Aorta (tissue), 5 donors: ENCODE measurements at regions of chr9 and their contacts with region 1.

Region 1: DNA sequence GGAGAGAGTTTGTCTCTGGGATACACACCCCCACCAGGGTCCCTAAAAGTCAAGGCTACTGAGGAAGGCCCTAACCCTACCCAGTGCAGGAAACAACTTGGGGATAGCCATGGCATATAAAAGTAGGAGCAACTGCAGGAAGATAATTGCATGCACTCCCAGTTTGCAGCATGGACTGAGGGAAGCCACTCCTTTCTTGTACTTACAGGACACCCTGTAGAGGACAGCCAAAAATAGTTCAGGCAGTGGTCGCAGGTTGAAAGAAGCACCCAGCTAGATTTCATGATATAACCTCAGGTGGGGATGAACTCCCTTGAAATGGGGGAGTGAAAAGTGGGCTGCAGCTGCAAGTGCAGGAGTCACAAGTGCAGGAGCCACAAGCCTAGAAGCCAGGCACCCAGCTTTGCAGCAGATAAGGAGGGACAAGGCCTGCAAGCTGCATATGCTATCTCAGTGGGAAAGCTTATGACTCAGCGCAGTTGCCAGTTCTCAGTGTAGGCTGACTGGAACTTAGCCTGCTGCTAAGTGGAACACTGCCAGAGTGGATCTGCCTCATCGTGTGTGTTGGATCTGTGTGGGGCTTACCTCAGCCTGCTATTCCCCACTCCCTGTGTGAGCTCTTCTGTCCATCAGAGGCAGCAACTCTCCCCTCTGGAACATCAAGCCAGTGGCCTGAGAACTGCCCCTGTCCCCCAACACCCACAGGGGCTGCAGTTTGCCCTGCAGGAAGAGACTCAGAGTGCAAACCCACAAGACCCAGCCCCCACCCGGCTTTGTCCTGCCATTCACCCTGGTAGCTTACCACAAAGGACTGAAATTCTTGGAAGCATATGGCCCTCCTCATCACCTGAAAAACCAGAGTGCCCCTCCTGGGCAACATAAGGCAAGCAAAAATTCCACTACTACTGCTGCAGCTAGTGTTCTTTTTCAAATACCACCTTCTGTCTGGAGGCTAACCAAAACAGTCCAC is 42.7 kb downstream of the CYLC2 start:
- DNase-seq: no peak
- ATAC-seq: no peak
- H3K4me3 ChIP-seq: no peak overlapping the region
- H3K27ac ChIP-seq: no peak overlapping the region
- H3K4me1 ChIP-seq: no peaks in the 10 kb centered on the region
- H3K27me3 ChIP-seq: no peaks in the 10 kb centered on the region

Region 2: GRCh38 chr9:102985162-102985895 is 52.5 kb before region 1 on chr9:
- intact Hi-C with region 1: loop called in 1 of 2 experiments (anchors 5 kb)
- DNase-seq: no peak
- ATAC-seq: peak; percentile 36
- H3K4me3 ChIP-seq: no peak overlapping the region
- H3K27ac ChIP-seq: no peak overlapping the region
- H3K4me1 ChIP-seq: no peaks in the 10 kb centered on the region
- H3K27me3 ChIP-seq: no peaks in the 10 kb centered on the region

Region 3: GRCh38 chr9:103089357-103089756 is 51.6 kb after region 1 on chr9:
- intact Hi-C with region 1: no loop called
- DNase-seq: no peak
- ATAC-seq: no peak
- H3K4me3 ChIP-seq: no peak overlapping the region
- H3K27ac ChIP-seq: no peak overlapping the region
- H3K4me1 ChIP-seq: no peaks in the 10 kb centered on the region
- H3K27me3 ChIP-seq: no peaks in the 10 kb centered on the region